Prostate gland (tissue), 2 donors: ENCODE measurements at regions of chr12 and their contacts with region 1.

Region 1: GRCh38 chr12:104177663-104178501 is 37.7 kb upstream of the TXNRD1 start:
- DNase-seq: peak; percentile 87
- H3K4me3 ChIP-seq: no peak overlapping the region
- H3K27ac ChIP-seq: peak overlapping the region; percentile 70 to 79
- H3K4me1 ChIP-seq: peaks cover 5% of the 10 kb centered on the region
- H3K27me3 ChIP-seq: no peaks in the 10 kb centered on the region
- CTCF ChIP-seq: peak in 3 of 4 experiments; percentile 23 to 38 (median 32)
- POLR2A ChIP-seq: no peak

Region 2: DNA sequence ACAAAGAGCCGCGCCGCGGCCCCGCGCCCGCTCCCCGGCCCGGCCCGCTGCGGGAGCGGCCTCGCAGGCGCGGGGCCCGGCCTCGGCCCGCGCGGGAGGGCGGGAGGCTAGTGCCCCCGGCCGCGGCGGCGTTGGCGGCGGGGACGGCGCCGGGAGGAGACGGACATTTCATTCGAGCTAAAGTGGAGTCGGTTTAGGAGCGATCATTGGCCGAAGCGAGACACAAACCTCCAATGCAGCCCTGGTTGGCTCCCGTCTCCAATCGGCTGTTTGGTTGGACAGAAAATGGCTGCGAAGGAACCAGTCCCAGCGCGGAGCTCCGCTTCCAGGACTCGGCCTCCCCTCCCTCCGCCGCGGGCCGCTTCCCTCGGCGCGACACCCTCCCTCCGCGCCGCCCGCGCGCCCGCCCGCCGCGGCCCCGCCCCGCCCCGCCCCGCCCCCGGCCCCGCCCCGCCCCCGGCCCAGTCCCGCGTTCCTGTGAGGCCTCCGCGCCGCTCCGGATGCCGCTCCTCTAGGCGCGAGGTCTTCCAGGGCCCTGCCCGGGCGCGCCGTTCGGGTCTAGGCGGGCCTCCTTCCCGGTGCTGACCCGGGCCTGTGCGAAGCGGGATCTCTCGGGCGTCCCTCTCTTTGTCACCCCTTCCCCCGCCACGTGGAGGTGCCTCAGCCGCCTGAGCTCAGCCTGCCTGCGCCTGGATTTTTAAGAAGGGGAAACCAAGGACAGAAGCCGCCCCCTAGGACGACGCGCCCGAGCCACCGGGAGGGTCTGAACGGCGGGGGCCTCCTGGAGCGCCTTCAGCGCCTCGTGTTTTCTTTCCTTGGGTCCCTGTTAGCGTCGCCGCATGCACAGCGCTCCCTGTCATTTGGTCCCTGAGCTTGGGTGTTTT is 39.7 kb before region 1 on chr12 and contains the start of gene NFYB:
- intact Hi-C with region 1: loop called (anchors 5 kb)
- DNase-seq: peak; percentile 97
- H3K4me3 ChIP-seq: peak within 1 kb of the TSS; percentile 81
- H3K27ac ChIP-seq: peak within 1 kb of the TSS; percentile 85 to 87
- H3K4me1 ChIP-seq: peaks cover 3% of the 10 kb centered on the region
- H3K27me3 ChIP-seq: no peaks in the 10 kb centered on the region
- CTCF ChIP-seq: no peak
- POLR2A ChIP-seq: peak; percentile 79
- total RNA-seq, gene NFYB: 37.9 to 41.1 TPM

Region 3: DNA sequence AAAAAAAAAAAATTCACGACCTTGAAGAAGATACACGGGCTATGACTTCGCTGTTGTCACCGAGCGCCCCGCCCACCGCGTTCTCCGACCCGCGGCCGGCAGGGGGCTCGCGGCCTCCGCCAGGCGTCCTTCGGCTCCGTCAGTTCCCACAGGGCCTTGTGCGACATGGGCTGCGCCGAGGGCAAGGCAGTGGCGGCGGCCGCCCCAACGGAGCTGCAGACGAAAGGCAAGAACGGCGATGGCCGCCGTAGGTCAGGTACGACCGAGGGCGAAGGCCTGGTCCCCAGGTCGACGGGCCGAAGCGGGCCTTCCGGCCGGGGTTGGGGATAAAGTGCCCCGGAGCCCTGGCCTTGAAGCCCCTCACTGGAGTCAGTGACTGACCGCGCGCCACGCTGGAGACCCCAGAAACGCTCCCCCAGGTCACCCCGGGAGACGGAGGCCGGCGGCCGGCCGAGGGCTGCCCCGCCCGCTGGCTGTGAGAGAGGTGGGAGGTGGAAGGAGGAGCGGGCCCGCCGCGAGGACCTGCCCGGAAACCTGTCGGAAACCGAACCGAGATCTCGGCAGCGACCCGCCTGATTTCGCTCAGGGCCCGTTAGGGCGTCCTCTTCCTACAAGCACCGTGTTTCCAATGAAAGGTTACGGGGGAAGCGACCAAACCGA is 37.9 kb after region 1 on chr12 and contains the start of gene TXNRD1:
- intact Hi-C with region 1: loop called (anchors 1 kb)
- DNase-seq: peak; percentile 63
- H3K4me3 ChIP-seq: peak within 1 kb of the TSS; percentile 31 to 45
- H3K27ac ChIP-seq: peak within 1 kb of the TSS; percentile 73
- H3K4me1 ChIP-seq: peaks cover 7% of the 10 kb centered on the region
- H3K27me3 ChIP-seq: no peaks in the 10 kb centered on the region
- CTCF ChIP-seq: peak; percentile 47 to 89 (median 68)
- POLR2A ChIP-seq: no peak
- total RNA-seq, gene TXNRD1: 87.6 to 115 TPM

Region 4: DNA sequence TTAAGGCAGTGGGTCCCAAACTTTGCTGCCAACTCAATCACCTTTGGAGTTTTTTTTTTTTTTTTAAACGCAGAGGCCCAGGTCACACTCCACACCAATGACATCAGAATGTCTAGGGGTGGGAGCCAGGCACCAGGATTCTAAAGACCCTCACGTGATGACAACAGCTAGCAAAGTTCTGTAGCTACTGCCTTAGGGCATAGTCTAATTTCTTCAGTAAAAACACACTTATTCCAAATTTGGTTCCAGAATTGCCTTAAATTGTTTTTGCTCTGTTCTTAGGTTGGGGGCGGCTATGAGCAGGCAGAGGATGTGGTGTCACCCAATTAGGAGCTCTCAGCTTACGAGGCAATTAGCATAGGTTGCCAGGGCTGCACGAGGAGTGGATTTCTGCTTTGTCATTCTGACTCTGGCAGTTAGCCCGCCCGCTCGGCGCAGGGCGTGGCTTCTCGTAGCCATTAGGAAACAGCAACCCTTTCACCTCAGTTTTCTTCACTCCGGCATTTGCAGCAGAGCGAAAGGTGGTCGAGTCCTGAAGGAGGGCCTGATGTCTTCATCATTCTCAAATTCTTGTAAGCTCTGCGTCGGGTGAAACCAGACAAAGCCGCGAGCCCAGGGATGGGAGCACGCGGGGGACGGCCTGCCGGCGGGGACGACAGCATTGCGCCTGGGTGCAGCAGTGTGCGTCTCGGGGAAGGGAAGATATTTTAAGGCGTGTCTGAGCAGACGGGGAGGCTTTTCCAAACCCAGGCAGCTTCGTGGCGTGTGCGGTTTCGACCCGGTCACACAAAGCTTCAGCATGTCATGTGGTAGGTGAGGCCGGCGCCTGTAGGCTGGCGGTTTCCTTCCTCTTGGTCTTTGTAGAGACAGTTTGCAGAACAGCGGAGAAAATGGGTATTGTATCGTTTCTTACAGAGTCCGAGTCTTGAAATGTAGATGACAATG is 108.9 kb after region 1 on chr12:
- intact Hi-C with region 1: loop called (anchors 5 kb)
- DNase-seq: peak; percentile 91
- H3K4me3 ChIP-seq: peak overlapping the region; percentile 54 to 61
- H3K27ac ChIP-seq: peak overlapping the region; percentile 85 to 91
- H3K4me1 ChIP-seq: no peaks in the 10 kb centered on the region
- H3K27me3 ChIP-seq: no peaks in the 10 kb centered on the region
- CTCF ChIP-seq: no peak
- POLR2A ChIP-seq: peak; percentile 79